ENCODE measurements at regions of chr12 and their contacts with region 1.

Region 1: DNA sequence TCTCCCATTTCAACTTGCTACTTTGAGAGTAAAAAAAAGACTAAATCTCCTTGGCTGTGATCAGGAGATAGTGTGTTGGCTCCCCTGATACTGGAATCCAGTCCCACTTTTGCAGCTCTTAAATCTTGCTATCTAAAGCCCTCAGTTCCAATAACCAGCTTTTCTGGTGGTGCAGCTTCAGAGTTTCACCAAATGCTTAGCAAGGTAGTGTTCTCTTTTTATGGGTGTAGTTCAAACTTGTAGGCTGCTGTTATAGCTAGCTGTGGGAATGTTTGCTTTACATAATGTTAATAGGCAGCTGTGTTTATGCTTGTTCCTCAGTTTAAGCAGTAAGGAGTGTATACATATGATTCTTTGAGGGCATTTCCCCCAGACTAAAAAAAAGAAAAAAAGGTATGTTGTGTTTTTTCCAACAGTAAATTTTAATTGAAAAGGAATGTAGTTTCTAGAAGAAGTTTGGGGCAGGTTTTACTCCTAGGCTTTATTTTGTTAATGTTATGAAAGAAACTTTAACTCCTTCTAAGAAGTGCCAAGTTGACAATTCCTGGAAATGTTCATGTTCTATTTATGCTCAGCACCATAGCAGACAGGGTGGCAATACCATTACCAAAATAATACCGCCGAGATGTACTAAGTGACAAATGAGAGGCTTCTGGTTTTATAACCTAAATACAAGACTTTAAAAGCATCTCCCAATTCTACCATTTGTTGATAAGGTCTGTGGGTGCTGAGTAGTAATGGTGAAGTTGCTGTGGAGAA is 12.1 kb downstream of the CRADD start:
- DNase-seq: no peak
- ATAC-seq: no peak
- H3K4me3 ChIP-seq: no peak overlapping the region
- H3K4me3 Mint-ChIP-seq: no peak overlapping the region
- H3K27ac ChIP-seq: no peak overlapping the region
- H3K27ac Mint-ChIP-seq: no peak overlapping the region
- H3K4me1 ChIP-seq: peaks cover 6% of the 10 kb centered on the region
- H3K4me1 Mint-ChIP-seq: peaks cover 11% of the 10 kb centered on the region
- H3K27me3 ChIP-seq: no peaks in the 10 kb centered on the region
- H3K27me3 Mint-ChIP-seq: no peaks in the 10 kb centered on the region
- CTCF ChIP-seq: no peak

Region 2: GRCh38 chr12:93793983-93794382 is 104.7 kb after region 1 on chr12:
- CTCF ChIA-PET with region 1: no interaction called
- POLR2A ChIA-PET with region 1: no interaction called
- intact Hi-C with region 1: no loop called
- DNase-seq: no peak
- ATAC-seq: no peak
- H3K4me3 ChIP-seq: no peak overlapping the region
- H3K4me3 Mint-ChIP-seq: no peak overlapping the region
- H3K27ac ChIP-seq: no peak overlapping the region
- H3K27ac Mint-ChIP-seq: no peak overlapping the region
- H3K4me1 ChIP-seq: peaks cover 4% of the 10 kb centered on the region
- H3K4me1 Mint-ChIP-seq: peaks cover 11% of the 10 kb centered on the region
- H3K27me3 ChIP-seq: no peaks in the 10 kb centered on the region
- H3K27me3 Mint-ChIP-seq: no peaks in the 10 kb centered on the region
- CTCF ChIP-seq: no peak

Region 3: DNA sequence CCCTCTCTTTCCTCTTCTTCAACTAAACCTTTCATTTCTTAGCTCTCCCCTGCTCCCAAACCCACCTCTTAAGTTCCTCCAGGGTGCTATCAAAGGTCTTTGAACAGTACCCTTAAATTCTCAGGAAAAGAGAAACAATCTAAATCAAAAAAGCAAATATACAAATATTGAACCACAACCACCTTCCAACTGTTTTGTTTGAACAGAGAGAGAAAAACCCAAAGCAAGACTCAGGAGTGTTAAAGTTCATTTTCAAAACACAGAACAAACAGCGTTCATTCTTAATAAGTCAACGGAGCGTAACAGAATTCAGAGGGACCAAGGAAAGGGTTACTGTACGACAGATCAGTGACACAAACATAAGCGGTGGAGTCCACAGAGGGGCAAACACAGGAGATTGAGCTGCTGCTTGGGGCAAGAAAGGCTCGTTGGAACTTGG is 1241.0 kb after region 1 on chr12:
- CTCF ChIA-PET with region 1: no interaction called
- POLR2A ChIA-PET with region 1: no interaction called
- intact Hi-C with region 1: loop called in 1 of 2 experiments (anchors 5 kb)
- DNase-seq: no peak
- ATAC-seq: no peak
- H3K4me3 ChIP-seq: no peak overlapping the region
- H3K4me3 Mint-ChIP-seq: no peak overlapping the region
- H3K27ac ChIP-seq: no peak overlapping the region
- H3K27ac Mint-ChIP-seq: no peak overlapping the region
- H3K4me1 ChIP-seq: no peaks in the 10 kb centered on the region
- H3K4me1 Mint-ChIP-seq: no peaks in the 10 kb centered on the region
- H3K27me3 ChIP-seq: no peaks in the 10 kb centered on the region
- H3K27me3 Mint-ChIP-seq: no peaks in the 10 kb centered on the region
- CTCF ChIP-seq: no peak

Measured in CD4-positive, alpha-beta T cell (primary cell).